A549 (cell line): ENCODE measurements at regions of chr19 and their contacts with region 1.

Region 1: DNA sequence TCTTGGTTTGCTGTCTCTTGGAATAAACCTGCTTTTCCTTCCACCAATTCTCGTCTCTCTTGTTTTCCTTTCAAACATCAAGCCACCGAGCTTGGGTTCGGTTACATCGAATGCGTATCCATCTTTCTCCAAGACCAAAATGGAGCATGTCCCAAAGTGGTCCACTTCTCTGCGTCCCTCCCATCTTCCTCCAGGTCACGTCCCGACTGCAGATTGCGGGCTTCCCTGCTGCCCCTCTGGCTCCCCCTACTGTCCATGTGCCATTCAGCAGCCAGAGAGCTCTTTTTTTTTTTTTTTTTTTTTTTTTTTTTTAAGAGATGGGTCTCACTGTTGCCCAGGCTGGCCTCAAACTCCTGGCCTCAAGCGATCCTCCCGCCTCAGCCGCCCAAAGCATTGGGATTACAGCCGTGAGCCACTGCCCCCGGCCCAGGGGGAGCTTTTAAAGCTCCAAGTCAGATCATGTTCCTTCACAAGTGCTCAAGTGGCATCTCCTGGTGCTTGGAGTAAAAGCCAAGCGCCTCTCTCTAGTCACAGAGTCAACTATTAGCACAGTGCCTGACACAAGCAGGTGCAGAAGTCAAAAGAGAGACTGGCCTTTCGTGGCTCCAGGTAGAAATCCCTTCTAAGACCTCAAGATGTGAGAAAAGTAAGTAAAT is 10.0 kb downstream of the COL5A3 start:
- DNase-seq: peak; percentile 70 to 74
- ATAC-seq: peak; percentile 79 to 82; a peak in 5 of 6 replicates
- H3K4me3 ChIP-seq: no peak overlapping the region
- H3K27ac ChIP-seq: no peak overlapping the region
- H3K4me1 ChIP-seq: peaks cover 5% of the 10 kb centered on the region; the same call in 1 of the 3 replicates
- CTCF ChIP-seq: peak; percentile 64
- EP300 ChIP-seq: no peak
- POLR2A ChIP-seq: no peak
- RAD21 ChIP-seq: peak; percentile 63 to 71

Region 2: GRCh38 chr19:9945319-9945966 is 54.9 kb before region 1 on chr19:
- CTCF ChIA-PET with region 1: interaction called, 10 read pairs
- POLR2A ChIA-PET with region 1: no interaction called
- DNase-seq: peak in 1 of 2 experiments; percentile 37
- ATAC-seq: peak; percentile 70 to 87
- H3K4me3 ChIP-seq: no peak overlapping the region
- H3K27ac ChIP-seq: peak overlapping the region in 1 of 2 experiments; percentile 59; a peak in 2 of 6 replicates
- H3K4me1 ChIP-seq: peaks cover 7% of the 10 kb centered on the region; the same call in 2 of the 3 replicates
- CTCF ChIP-seq: no peak
- EP300 ChIP-seq: no peak
- POLR2A ChIP-seq: no peak
- RAD21 ChIP-seq: no peak

Region 3: GRCh38 chr19:9986787-9987281 is 13.5 kb before region 1 on chr19:
- CTCF ChIA-PET with region 1: interaction called, 25 read pairs
- POLR2A ChIA-PET with region 1: no interaction called
- DNase-seq: no peak
- ATAC-seq: no peak
- H3K4me3 ChIP-seq: no peak overlapping the region
- H3K27ac ChIP-seq: no peak overlapping the region
- H3K4me1 ChIP-seq: no peaks in the 10 kb centered on the region
- CTCF ChIP-seq: no peak
- EP300 ChIP-seq: no peak
- POLR2A ChIP-seq: no peak
- RAD21 ChIP-seq: no peak

Region 4: GRCh38 chr19:10021863-10022262 is 21.6 kb after region 1 on chr19:
- CTCF ChIA-PET with region 1: interaction called, 19 read pairs
- POLR2A ChIA-PET with region 1: no interaction called
- DNase-seq: no peak
- ATAC-seq: no peak
- H3K4me3 ChIP-seq: no peak overlapping the region
- H3K27ac ChIP-seq: no peak overlapping the region
- H3K4me1 ChIP-seq: peaks cover under 1% of the 10 kb centered on the region; the same call in 2 of the 3 replicates
- CTCF ChIP-seq: no peak
- EP300 ChIP-seq: no peak
- POLR2A ChIP-seq: no peak
- RAD21 ChIP-seq: no peak